ENCODE measurements at regions of chr9 and their contacts with region 1.

Region 1: DNA sequence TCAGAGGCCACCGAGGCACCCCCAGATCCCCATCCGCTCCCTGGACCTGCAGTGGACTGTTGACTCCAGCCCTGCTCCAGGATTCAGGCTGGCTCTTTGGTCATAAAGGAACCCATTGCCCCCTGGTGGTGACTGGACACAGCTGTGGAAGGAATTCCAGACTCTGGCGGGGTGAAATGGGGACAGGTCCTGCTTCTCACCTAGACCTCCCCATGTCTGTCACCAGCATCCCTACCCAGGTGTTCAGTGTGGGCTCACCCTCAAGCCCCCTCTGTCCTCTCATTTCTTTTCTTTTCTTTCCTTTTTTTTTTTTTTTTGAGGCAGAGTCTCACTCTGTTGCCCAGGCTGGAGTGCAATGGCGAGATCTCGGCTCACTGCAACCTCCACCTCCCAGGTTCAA is 25.5 kb upstream of the STXBP1 start:
- DNase-seq: peak; percentile 81 to 90 (median 82)
- H3K4me3 ChIP-seq: no peak overlapping the region
- H3K27ac ChIP-seq: no peak overlapping the region
- H3K4me1 ChIP-seq: no peaks in the 10 kb centered on the region
- H3K27me3 ChIP-seq: no peaks in the 10 kb centered on the region
- CTCF ChIP-seq: peak; percentile 48 to 94 (median 92)
- EP300 ChIP-seq: no peak
- POLR2A ChIP-seq: peak; percentile 16

Region 2: GRCh38 chr9:126448865-126449537 is 1137.5 kb before region 1 on chr9:
- intact Hi-C with region 1: no loop called
- DNase-seq: no peak
- H3K4me3 ChIP-seq: no peak overlapping the region
- H3K27ac ChIP-seq: no peak overlapping the region
- H3K4me1 ChIP-seq: peaks cover 2% of the 10 kb centered on the region
- H3K27me3 ChIP-seq: no peaks in the 10 kb centered on the region
- CTCF ChIP-seq: no peak
- EP300 ChIP-seq: no peak
- POLR2A ChIP-seq: no peak

Region 3: DNA sequence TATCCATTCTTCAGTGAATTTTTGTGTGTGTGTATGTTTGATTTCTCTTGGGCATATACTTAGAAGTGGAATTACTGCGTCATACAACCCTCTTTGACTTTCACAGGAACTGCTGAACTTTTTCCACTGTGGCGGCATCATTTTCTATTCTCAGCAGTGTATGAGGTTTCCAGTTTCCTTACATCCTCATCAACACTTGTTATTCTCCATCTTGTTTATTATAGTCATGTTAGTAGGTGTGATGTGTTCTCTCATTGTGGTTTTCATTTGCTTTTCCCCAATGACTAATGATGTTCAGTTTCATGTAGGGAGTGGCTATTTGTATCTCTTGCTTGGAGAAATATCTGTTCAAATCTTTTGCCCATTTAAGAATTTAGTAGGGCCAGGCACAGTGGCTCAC is 159.8 kb before region 1 on chr9:
- intact Hi-C with region 1: no loop called
- DNase-seq: no peak
- H3K4me3 ChIP-seq: no peak overlapping the region
- H3K27ac ChIP-seq: no peak overlapping the region
- H3K4me1 ChIP-seq: peaks cover 8% of the 10 kb centered on the region
- H3K27me3 ChIP-seq: no peaks in the 10 kb centered on the region
- CTCF ChIP-seq: no peak
- EP300 ChIP-seq: no peak
- POLR2A ChIP-seq: no peak

Region 4: DNA sequence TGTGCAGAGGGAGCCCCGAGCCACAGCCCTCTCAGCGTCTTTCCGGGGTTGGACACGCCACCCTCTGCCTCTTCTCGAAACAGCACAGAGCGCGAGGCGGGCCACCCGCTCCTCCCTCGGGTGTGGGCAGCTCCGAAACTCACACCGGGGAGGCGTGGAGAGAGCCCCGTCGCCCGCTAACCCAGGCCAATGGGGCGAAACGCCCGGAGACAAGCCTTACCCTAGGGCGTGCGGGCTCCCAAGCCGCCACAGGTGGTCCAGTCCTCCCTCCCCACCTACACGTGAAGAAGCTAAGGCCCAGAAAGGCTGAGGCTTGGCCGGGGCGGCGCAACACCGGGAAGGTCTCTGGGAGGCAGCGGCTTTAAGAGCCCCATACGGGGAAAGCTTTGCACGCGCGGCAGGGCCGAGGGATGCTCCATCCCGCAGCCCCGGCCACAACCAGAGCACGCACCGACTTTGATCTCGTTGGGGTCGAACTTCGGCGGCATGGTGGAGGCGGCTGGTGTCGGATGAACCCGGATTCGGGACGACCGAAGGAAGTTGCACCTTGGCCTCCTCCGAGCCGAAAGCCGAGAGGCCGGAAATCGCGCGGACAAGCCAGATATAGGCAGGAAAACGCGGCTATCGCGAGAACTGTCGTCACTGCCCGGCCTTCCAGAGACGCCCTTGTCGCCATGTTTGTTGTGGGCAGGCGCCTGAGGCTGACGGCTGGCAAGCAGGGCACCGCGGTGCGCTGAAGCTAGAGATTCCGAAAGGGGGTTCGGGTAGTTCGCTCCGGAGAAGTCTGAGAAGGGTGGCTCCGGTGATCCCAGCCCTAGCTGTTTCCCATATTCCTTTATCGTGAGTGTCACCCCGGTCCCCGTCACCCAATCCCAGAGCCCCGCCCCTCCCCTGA is 135.5 kb before region 1 on chr9 and contains the starts of genes LRSAM1 and RPL12:
- intact Hi-C with region 1: loop called in 1 of 4 experiments (anchors 5 kb)
- DNase-seq: peak; percentile 98 to 100 (median 99)
- H3K4me3 ChIP-seq: peak within 1 kb of the TSS; percentile 85
- H3K27ac ChIP-seq: peak within 1 kb of the TSS; percentile 79 to 85
- H3K4me1 ChIP-seq: peaks cover 12% of the 10 kb centered on the region
- H3K27me3 ChIP-seq: no peaks in the 10 kb centered on the region
- CTCF ChIP-seq: no peak
- EP300 ChIP-seq: no peak
- POLR2A ChIP-seq: peak; percentile 100
- total RNA-seq, gene LRSAM1: 14.2 to 28.5 (median 20.9) TPM
- total RNA-seq, gene RPL12: 1,883 to 4,136 (median 2,145) TPM

Region 5: GRCh38 chr9:127503947-127504782 is 82.4 kb before region 1 on chr9:
- intact Hi-C with region 1: loop called (anchors 1 to 2 kb)
- DNase-seq: peak; percentile 83 to 92 (median 89)
- H3K4me3 ChIP-seq: no peak overlapping the region
- H3K27ac ChIP-seq: peak overlapping the region in 1 of 2 donors; percentile 29
- H3K4me1 ChIP-seq: peaks cover 2% of the 10 kb centered on the region
- H3K27me3 ChIP-seq: no peaks in the 10 kb centered on the region
- CTCF ChIP-seq: peak; percentile 87 to 94 (median 92)
- EP300 ChIP-seq: no peak
- POLR2A ChIP-seq: no peak

Region 6: GRCh38 chr9:127734747-127735529 is 148.4 kb after region 1 on chr9 and contains the start of gene TOR2A:
- intact Hi-C with region 1: loop called (anchors 2 to 5 kb)
- DNase-seq: peak; percentile 95 to 98 (median 98)
- H3K4me3 ChIP-seq: peak within 1 kb of the TSS; percentile 88
- H3K27ac ChIP-seq: peak within 1 kb of the TSS; percentile 80 to 88
- H3K4me1 ChIP-seq: peaks cover 6% of the 10 kb centered on the region
- H3K27me3 ChIP-seq: no peaks in the 10 kb centered on the region
- CTCF ChIP-seq: peak; percentile 92 to 100 (median 100)
- EP300 ChIP-seq: no peak
- POLR2A ChIP-seq: peak; percentile 93
- total RNA-seq, gene TOR2A: 8.8 to 12.2 (median 9.9) TPM

Region 7: GRCh38 chr9:127785023-127785932 is 198.7 kb after region 1 on chr9:
- intact Hi-C with region 1: loop called in 1 of 4 experiments (anchors 5 kb)
- DNase-seq: peak; percentile 86 to 93 (median 92)
- H3K4me3 ChIP-seq: peak overlapping the region; percentile 100
- H3K27ac ChIP-seq: peak overlapping the region; percentile 95 to 96
- H3K4me1 ChIP-seq: peaks cover 11% of the 10 kb centered on the region
- H3K27me3 ChIP-seq: no peaks in the 10 kb centered on the region
- CTCF ChIP-seq: peak; percentile 92 to 96 (median 95)
- EP300 ChIP-seq: no peak
- POLR2A ChIP-seq: peak; percentile 11

Region 8: DNA sequence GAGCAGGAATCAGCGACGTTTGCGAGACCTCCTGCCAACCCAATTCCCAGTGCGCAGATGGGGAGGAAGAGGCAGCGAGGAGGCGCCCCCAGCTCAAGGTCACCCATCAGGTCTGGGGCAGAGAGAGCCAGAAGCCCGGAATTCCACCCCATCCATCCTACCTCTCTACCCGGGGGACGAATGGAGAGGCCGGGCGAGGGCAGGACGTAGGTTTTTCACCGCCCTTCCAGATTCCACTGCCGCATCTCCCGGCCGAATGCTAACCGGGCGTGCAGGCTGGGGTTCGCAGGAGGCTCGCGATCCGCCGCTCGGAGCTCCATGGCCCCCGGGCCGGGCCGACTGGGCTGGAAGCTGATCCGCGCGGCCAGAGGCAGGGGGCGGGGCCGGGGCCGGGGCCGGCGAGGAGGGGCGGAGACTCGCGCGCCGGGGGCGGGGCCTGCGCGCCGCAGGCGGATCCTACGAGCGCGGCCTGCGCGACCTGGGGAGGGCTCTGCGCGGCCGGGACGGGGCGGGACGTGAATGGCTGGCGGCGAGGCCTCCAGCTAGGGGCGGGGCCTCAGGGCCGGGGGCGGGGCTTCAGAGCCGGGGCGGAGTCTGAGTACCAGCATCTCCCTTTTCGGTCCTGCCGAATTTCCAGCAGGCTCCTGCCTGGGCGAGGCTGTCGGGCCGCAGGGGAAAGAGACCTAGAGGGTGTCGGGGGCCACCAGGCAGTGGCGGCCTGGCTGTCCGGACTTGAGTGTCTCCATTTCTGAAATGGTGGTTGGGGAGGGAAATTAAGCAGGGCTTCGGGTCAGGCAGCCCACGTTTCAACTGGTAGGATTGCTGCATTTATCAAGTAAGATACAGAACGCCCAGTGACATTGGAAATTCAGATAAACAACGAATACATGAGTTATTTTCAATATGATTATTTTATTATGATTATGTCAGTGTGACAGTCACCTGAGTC is 330.4 kb after region 1 on chr9 and contains the start of gene ST6GALNAC4:
- intact Hi-C with region 1: loop called in 3 of 4 experiments (anchors 2 to 5 kb)
- DNase-seq: peak; percentile 94 to 98 (median 97)
- H3K4me3 ChIP-seq: peak within 1 kb of the TSS; percentile 76
- H3K27ac ChIP-seq: peak within 1 kb of the TSS; percentile 39 to 69
- H3K4me1 ChIP-seq: peaks cover 6% of the 10 kb centered on the region
- H3K27me3 ChIP-seq: no peaks in the 10 kb centered on the region
- CTCF ChIP-seq: no peak
- EP300 ChIP-seq: peak; percentile 9
- POLR2A ChIP-seq: peak; percentile 64
- total RNA-seq, gene ST6GALNAC4: 29.5 to 58.4 (median 46.4) TPM

Measured in ovary (tissue), 10 donors.